B cell (primary cell): ENCODE measurements at regions of chr1 and their contacts with region 1.

Region 1: GRCh38 chr1:153572569-153573015 is 6.9 kb upstream of the S100A2 start:
- DNase-seq: peak; percentile 76
- ATAC-seq: peak; percentile 89
- H3K4me3 ChIP-seq: no peak overlapping the region
- H3K4me3 Mint-ChIP-seq: no peak overlapping the region
- H3K27ac ChIP-seq: no peak overlapping the region
- H3K27ac Mint-ChIP-seq: peak overlapping the region; percentile 56
- H3K4me1 ChIP-seq: peaks cover 4 to 22% of the 10 kb centered on the region in 2 donors
- H3K4me1 Mint-ChIP-seq: peaks cover 25% of the 10 kb centered on the region
- H3K27me3 ChIP-seq: peaks cover 0 to 2% (median under 1%) of the 10 kb centered on the region in 4 experiments
- H3K27me3 Mint-ChIP-seq: peaks cover 8% of the 10 kb centered on the region
- CTCF ChIP-seq: peak; percentile 80

Region 2: DNA sequence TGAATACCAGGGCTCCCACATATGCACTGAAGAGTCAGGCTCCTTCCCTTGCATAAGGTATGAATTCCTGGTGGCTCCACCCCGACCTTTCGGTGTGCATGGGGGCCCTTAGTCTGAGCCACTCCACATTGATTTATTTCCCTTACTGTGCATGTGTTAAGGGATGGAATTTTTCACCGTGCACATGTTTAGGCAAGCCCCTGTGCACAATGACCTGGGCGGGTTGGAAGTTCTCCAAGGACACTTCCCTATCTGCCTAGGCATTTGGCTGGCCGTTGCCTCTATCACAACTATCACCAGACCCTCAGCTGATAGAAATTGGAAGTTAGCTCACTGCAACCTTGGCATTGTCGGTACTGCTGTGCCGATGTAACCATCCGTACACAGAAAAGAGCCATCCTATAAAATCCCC is 46.5 kb before region 1 on chr1:
- CTCF ChIA-PET with region 1: interaction called, 189 read pairs
- POLR2A ChIA-PET with region 1: no interaction called
- intact Hi-C with region 1: no loop called
- DNase-seq: no peak
- ATAC-seq: no peak
- H3K4me3 ChIP-seq: no peak overlapping the region
- H3K4me3 Mint-ChIP-seq: no peak overlapping the region
- H3K27ac ChIP-seq: no peak overlapping the region
- H3K27ac Mint-ChIP-seq: no peak overlapping the region
- H3K4me1 ChIP-seq: no peaks in the 10 kb centered on the region
- H3K4me1 Mint-ChIP-seq: no peaks in the 10 kb centered on the region
- H3K27me3 ChIP-seq: peaks cover 0 to 2% (median 0%) of the 10 kb centered on the region in 4 experiments
- H3K27me3 Mint-ChIP-seq: peaks cover 4% of the 10 kb centered on the region
- CTCF ChIP-seq: no peak

Region 3: DNA sequence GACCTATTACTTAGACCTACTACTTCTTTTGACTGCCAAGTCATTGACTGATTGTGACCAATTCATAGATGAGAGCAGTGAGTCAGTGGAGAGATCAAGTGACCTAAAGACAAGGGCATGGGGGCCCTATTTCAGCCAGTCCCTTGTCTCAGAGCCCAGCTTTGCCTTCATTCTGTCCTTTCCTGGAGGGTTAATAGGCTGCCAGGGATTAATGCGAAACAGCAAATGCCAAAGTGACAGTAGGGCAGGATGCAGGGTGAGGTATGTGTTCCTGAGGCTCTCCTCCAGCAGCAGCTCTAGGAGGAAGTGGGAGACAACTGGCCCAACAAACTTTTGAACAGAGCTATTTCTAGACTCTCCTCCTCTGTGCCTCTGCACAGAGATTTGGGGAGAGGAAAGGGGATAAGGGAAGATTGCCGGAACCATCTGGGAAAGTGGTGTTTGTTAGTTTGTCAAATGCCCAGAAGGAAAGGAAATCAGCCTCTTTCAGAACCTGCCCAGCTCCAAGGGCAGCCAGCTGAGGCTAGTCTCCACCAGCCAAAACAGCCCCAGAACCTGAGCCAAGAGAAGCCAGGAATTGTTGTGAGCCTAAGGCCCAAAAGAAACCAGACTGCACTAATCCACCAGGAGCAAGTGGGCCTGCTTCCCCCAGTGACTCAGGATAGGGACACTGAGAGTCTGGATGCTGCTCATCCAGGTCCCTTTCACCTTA is 18.6 kb before region 1 on chr1:
- CTCF ChIA-PET with region 1: interaction called, 12 read pairs
- POLR2A ChIA-PET with region 1: no interaction called
- intact Hi-C with region 1: no loop called
- DNase-seq: no peak
- ATAC-seq: no peak
- H3K4me3 ChIP-seq: no peak overlapping the region
- H3K4me3 Mint-ChIP-seq: no peak overlapping the region
- H3K27ac ChIP-seq: no peak overlapping the region
- H3K27ac Mint-ChIP-seq: no peak overlapping the region
- H3K4me1 ChIP-seq: no peaks in the 10 kb centered on the region
- H3K4me1 Mint-ChIP-seq: peaks cover 2% of the 10 kb centered on the region
- H3K27me3 ChIP-seq: peaks cover 0 to 5% (median 0%) of the 10 kb centered on the region in 4 experiments
- H3K27me3 Mint-ChIP-seq: peaks cover 16% of the 10 kb centered on the region
- CTCF ChIP-seq: no peak

Region 4: GRCh38 chr1:153633716-153634665 is 61.4 kb after region 1 on chr1 and contains the start of gene CHTOP:
- CTCF ChIA-PET with region 1: interaction called, 32 read pairs
- POLR2A ChIA-PET with region 1: interaction called, 5 read pairs
- intact Hi-C with region 1: loop called (anchors 1 kb)
- DNase-seq: peak; percentile 99
- ATAC-seq: peak; percentile 89
- H3K4me3 ChIP-seq: peak within 1 kb of the TSS; percentile 90 to 100 (median 99)
- H3K4me3 Mint-ChIP-seq: peak within 1 kb of the TSS; percentile 97
- H3K27ac ChIP-seq: peak within 1 kb of the TSS; percentile 97 to 99
- H3K27ac Mint-ChIP-seq: peak within 1 kb of the TSS; percentile 100
- H3K4me1 ChIP-seq: peaks cover 9 to 24% of the 10 kb centered on the region in 2 donors
- H3K4me1 Mint-ChIP-seq: peaks cover 39% of the 10 kb centered on the region
- H3K27me3 ChIP-seq: no peaks in the 10 kb centered on the region
- H3K27me3 Mint-ChIP-seq: no peaks in the 10 kb centered on the region
- CTCF ChIP-seq: no peak
- total RNA-seq, gene CHTOP: 156 TPM in 2 replicates

Region 5: DNA sequence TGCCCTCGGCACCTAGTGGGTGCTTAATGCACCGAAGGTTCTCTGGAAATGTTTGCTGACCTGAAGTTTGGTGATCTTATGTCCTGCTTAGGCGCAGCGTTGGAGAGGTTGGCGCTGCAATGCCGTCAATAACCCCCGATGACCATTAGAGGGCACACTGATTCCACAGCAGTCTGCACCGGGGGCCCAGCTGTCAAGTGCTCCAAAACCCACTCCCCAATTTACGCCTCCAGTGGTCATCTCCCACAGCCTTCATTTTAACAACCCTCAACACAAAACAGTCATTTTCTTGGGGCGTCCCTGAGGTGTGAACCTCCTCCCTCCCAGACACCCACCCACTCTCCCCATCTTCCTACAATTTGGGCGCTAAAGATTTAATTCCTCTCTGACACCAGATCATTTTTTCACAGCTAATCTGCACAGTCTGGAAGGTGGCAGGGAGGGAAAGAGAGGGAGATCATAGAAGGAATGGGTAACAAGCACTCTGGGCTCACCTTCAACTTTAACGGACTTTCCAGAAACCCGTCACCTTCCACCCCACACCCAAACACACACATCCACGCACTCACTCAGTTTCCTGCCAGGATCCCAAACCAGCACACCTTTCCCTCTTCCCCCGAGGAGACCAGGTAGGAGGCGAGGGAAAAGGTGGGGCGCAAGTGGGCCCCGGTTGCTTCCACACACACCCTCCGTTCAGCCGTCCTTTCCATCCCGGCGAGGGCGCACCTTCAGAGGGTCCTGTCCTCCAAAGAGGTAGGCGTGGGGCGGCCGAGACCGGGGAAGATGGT is 105.3 kb after region 1 on chr1:
- CTCF ChIA-PET with region 1: interaction called, 15 read pairs
- POLR2A ChIA-PET with region 1: no interaction called
- intact Hi-C with region 1: no loop called
- DNase-seq: peak; percentile 73
- ATAC-seq: peak; percentile 77
- H3K4me3 ChIP-seq: peak overlapping the region in 4 of 5 experiments; percentile 28 to 57 (median 50)
- H3K4me3 Mint-ChIP-seq: peak overlapping the region; percentile 94
- H3K27ac ChIP-seq: no peak overlapping the region
- H3K27ac Mint-ChIP-seq: peak overlapping the region; percentile 5
- H3K4me1 ChIP-seq: peaks cover 26 to 30% of the 10 kb centered on the region in 2 donors
- H3K4me1 Mint-ChIP-seq: peaks cover 26% of the 10 kb centered on the region
- H3K27me3 ChIP-seq: peaks cover 0 to 37% (median 24%) of the 10 kb centered on the region in 4 experiments
- H3K27me3 Mint-ChIP-seq: peaks cover 49% of the 10 kb centered on the region
- CTCF ChIP-seq: peak; percentile 88

Region 6: DNA sequence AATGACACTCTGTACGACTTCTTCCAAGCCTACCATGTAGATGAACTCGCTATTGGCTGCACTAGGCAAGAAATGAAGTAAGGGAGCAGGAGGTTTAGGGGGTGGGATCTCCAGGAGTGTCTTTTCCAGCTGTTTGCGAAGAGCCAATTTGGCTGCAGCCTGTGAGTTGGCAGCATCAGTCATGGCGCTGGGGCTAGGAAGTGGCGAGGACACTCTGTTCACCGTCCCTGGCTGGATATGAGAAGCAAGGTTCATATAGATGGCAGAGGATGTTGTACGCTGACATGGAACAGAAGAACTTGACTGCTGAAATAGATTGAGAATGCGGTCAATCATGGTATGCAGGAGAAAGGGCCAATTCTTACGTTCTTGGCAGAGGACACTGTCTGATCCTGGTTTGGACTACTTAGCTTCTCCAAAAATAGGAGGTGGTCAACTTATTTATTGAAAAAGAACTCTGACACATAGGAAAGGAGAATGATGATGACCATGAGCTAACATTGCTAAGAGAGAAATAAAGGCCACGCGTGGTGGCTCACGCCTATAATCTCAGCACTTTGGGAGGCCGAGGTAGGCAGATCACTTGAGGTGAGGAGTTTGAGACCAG is 243.8 kb after region 1 on chr1:
- CTCF ChIA-PET with region 1: no interaction called
- POLR2A ChIA-PET with region 1: no interaction called
- intact Hi-C with region 1: no loop called
- DNase-seq: no peak
- ATAC-seq: no peak
- H3K4me3 ChIP-seq: no peak overlapping the region
- H3K4me3 Mint-ChIP-seq: no peak overlapping the region
- H3K27ac ChIP-seq: no peak overlapping the region
- H3K27ac Mint-ChIP-seq: no peak overlapping the region
- H3K4me1 ChIP-seq: peaks cover 0 to 1% of the 10 kb centered on the region in 2 donors
- H3K4me1 Mint-ChIP-seq: peaks cover 3% of the 10 kb centered on the region
- H3K27me3 ChIP-seq: no peaks in the 10 kb centered on the region
- H3K27me3 Mint-ChIP-seq: no peaks in the 10 kb centered on the region
- CTCF ChIP-seq: no peak